Calu3 (cell line): ENCODE measurements at regions of chr1 and their contacts with region 1.

Region 1: GRCh38 chr1:203273206-203273868 is 32.0 kb upstream of the BTG2 start:
- DNase-seq: peak; percentile 94
- H3K4me3 Mint-ChIP-seq: peak overlapping the region; percentile 40
- H3K27ac Mint-ChIP-seq: no peak overlapping the region
- H3K4me1 Mint-ChIP-seq: no peaks in the 10 kb centered on the region
- H3K27me3 Mint-ChIP-seq: peaks cover 34% of the 10 kb centered on the region
- CTCF ChIP-seq: peak; percentile 96

Region 2: DNA sequence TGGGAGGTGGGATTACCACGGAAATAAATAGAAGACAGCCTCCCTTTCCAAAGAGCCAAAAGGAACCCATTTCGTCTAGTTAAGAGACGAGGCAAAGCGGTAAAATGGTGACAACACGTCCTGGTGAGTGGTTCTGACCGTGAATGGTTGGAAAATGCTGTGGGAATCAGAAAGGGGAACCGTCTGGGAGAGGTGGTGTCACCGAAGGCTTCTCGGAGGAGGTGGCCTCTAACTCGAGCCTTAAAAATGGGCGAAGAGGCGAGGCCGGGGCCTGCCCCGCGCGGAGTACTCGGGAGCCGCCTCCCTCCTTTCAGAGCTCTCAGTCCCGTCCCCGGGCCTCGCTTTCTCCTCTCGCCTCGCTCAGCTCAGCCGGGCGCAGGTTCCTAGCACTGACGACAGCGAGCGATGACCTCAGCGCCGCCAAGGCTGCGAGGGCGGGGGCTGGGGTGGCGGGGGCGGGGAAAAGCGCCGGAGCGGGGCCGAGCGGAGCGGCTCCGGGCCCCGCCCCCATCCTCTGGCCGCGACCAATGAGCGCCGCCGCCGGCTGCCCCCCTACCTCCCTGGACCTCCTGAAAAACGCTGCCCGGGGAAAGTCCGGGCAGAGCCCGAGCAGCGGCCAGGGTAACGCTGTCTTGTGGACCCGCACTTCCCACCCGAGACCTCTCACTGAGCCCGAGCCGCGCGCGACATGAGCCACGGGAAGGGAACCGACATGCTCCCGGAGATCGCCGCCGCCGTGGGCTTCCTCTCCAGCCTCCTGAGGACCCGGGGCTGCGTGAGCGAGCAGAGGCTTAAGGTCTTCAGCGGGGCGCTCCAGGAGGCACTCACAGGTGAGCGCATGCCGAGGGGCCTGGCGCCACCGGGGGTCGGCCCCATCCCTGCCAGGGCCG is 31.8 kb after region 1 on chr1 and contains the start of gene BTG2:
- CTCF ChIA-PET with region 1: interaction called, 16 read pairs
- intact Hi-C with region 1: no loop called
- DNase-seq: peak; percentile 87
- H3K4me3 Mint-ChIP-seq: peak within 1 kb of the TSS; percentile 68
- H3K27ac Mint-ChIP-seq: peak within 1 kb of the TSS; percentile 66
- H3K4me1 Mint-ChIP-seq: peaks cover 31% of the 10 kb centered on the region
- H3K27me3 Mint-ChIP-seq: peaks cover 59% of the 10 kb centered on the region
- CTCF ChIP-seq: no peak
- total RNA-seq, gene BTG2: 2.7 and 4.9 TPM in 2 replicates

Region 3: DNA sequence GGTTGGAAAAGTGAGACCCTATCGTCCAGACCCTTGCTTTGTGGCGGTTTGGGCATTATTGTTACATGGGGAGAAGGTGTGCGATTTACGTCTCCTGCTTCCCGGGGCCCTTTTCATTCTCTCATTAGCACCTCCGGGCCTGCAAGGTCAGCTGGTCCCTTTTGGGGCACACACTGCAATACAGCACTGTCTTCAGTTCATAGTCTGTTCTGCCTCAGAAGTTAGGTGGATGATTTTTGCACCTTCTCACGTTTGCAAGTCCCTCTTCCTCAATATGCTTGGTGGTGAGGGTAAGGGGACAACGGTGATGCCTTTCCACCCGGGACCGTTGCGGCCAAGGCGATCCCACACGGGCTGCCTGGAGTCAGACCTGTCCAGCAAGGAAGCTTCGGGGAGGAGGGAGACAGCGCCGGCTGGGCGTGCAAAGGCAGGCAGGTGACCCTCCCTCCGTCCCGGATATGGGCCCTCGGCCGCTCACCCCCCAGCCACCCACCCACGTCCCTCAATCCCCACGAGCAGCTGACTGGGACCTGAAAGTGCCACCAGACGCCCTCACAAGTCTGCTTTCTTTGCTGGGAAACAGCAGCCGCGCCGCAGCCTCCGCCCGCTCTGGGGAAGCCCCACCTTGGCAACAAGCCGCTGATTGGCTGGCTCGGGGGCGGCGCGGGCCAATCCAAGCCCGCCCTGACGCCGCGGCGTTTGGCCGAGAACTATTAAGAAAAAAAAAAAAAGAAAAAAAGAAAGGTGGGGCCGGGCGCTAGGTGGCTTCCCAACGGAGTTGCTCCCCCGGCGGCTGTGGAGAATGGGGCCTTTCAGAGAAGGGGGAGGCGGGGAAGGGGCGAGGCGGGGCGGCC is 53.7 kb after region 1 on chr1:
- CTCF ChIA-PET with region 1: interaction called, 36 read pairs
- intact Hi-C with region 1: loop called (anchors 2 kb)
- DNase-seq: peak; percentile 96
- H3K4me3 Mint-ChIP-seq: peak overlapping the region; percentile 71
- H3K27ac Mint-ChIP-seq: peak overlapping the region; percentile 70
- H3K4me1 Mint-ChIP-seq: peaks cover 21% of the 10 kb centered on the region
- H3K27me3 Mint-ChIP-seq: peaks cover 54% of the 10 kb centered on the region
- CTCF ChIP-seq: no peak

Region 4: DNA sequence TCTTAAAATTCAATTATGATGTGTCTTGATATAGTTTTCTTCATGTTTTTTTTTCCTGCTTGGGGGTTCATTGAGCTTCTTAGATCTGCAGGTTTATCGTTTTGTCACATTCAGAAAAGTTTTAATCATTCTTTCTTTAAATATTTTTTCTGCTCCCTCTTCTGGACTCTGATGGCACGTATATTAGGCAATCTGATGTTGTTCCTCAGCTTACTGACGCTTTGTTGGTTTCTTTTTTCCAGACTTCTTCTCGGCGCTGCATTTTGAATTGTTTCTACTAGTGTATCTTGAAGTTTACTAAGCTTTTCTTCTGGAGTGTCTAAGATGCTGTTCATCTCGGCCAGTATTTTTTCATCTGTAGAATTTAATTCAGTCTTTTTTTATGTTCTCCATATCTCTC is 122.4 kb after region 1 on chr1:
- CTCF ChIA-PET with region 1: no interaction called
- intact Hi-C with region 1: no loop called
- DNase-seq: no peak
- H3K4me3 Mint-ChIP-seq: no peak overlapping the region
- H3K27ac Mint-ChIP-seq: no peak overlapping the region
- H3K4me1 Mint-ChIP-seq: no peaks in the 10 kb centered on the region
- H3K27me3 Mint-ChIP-seq: peaks cover 53% of the 10 kb centered on the region
- CTCF ChIP-seq: no peak

Region 5: DNA sequence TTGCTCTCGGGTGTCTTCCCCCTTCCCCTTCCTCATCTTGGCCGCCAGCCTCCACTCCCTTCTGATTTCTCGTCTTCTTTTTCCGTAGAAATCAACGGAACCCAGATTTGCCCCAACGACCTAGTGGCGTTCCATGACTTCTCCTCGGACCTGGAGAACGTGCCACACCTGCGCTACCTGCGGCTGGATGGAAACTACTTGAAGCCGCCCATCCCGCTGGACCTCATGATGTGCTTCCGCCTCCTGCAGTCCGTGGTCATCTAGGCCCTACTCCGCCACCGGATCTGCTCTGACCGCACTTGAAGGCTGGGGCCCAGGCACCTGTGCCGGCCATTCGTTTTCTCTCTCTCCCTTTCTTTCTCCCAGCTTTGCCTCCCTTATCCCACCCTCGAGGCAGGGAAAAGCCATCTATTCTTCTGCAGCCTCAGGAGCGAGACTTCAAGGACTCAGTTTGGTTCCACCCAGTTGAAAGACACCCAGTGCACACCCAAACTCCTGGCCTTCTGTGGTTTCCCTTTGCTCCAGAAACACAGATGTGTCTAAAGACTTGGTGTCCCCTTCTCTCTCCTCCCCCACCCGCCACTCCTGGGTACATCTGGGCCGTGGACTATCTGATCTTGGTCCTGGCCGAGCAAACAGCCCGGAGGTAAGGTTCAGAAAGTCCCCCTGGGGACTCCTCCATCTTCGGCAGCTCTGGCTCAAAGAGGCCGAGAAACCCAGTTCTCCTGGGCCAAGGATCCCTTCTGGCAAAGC is 213.5 kb after region 1 on chr1:
- CTCF ChIA-PET with region 1: interaction called, 8 read pairs
- intact Hi-C with region 1: loop called (anchors 5 kb)
- DNase-seq: no peak
- H3K4me3 Mint-ChIP-seq: peak overlapping the region; percentile 51
- H3K27ac Mint-ChIP-seq: no peak overlapping the region
- H3K4me1 Mint-ChIP-seq: no peaks in the 10 kb centered on the region
- H3K27me3 Mint-ChIP-seq: peaks cover 48% of the 10 kb centered on the region
- CTCF ChIP-seq: no peak

Region 6: DNA sequence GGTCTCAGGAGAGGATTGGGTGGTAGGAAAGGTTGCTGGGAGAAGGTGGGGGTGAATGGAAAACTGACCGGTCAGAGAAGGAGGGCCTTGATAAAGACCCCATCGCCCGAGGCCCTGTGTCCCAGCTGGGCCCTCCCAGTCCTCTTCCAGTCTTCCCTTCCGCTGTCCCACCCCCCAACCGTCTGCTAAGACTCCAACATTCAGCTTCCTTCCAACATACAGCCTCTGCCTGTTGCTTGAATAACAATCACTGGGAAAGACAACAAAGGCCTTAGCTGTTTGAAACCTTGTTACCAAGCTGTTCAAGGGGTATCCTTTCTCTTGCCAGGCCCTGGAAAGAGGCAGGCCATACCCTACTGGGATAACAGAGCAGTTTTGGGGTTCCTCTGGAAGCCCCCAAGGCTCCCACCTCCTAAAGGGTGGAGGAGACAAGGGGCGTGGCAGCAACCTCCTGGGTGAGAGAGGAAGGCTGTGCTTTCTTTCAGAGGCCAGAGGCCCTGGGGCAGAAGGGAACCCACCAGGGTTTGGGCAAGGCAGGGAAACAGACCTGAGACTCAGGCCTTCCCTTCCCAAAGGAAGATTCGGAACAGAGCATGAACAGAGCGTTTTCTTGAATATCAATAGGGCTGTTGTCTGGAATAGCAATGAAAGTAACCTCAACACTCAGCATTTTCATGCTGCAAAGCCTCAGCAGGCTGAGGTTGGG is 874.2 kb after region 1 on chr1:
- CTCF ChIA-PET with region 1: no interaction called
- intact Hi-C with region 1: no loop called
- DNase-seq: no peak
- H3K4me3 Mint-ChIP-seq: no peak overlapping the region
- H3K27ac Mint-ChIP-seq: no peak overlapping the region
- H3K4me1 Mint-ChIP-seq: no peaks in the 10 kb centered on the region
- H3K27me3 Mint-ChIP-seq: peaks cover 44% of the 10 kb centered on the region
- CTCF ChIP-seq: no peak